ENCODE measurements at regions of chr1 and their contacts with region 1.

Region 1: DNA sequence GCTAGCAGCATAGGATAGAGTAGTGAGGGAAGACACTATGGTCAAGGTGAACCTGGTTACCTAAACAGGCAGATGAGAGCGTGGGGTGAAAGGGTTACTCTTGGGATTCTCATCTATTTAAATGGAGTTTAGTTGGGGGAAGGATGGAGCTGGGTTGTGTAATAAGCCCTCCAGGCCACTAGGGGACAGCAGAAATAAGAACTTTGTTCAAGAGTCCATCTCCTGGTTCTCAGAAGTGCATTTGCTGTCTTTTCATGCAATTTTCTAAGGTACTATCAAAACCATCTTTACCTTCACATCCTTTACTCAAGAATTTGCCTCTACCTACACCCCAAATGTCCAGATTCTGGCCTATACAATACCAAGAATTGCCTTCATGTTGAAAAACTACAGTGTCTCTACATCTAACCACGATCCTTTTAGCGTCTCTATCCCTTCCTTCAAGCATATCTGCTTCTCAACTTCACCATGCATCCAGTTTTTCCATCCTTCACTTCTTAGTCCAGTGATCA is 28.0 kb downstream of the SLAMF1 start:
- DNase-seq: peak; percentile 63
- ATAC-seq: peak; percentile 24
- H3K4me3 Mint-ChIP-seq: no peak overlapping the region
- H3K27ac Mint-ChIP-seq: peak overlapping the region; percentile 81
- H3K4me1 Mint-ChIP-seq: peaks cover 56% of the 10 kb centered on the region
- H3K27me3 Mint-ChIP-seq: no peaks in the 10 kb centered on the region
- CTCF ChIP-seq: peak; percentile 91

Region 2: GRCh38 chr1:160376525-160377131 is 242.2 kb before region 1 on chr1:
- CTCF ChIA-PET with region 1: interaction called, 10 read pairs
- POLR2A ChIA-PET with region 1: no interaction called
- intact Hi-C with region 1: no loop called
- DNase-seq: peak; percentile 41
- ATAC-seq: peak; percentile 85
- H3K4me3 Mint-ChIP-seq: no peak overlapping the region
- H3K27ac Mint-ChIP-seq: no peak overlapping the region
- H3K4me1 Mint-ChIP-seq: peaks cover 11% of the 10 kb centered on the region
- H3K27me3 Mint-ChIP-seq: no peaks in the 10 kb centered on the region
- CTCF ChIP-seq: peak; percentile 95

Region 3: DNA sequence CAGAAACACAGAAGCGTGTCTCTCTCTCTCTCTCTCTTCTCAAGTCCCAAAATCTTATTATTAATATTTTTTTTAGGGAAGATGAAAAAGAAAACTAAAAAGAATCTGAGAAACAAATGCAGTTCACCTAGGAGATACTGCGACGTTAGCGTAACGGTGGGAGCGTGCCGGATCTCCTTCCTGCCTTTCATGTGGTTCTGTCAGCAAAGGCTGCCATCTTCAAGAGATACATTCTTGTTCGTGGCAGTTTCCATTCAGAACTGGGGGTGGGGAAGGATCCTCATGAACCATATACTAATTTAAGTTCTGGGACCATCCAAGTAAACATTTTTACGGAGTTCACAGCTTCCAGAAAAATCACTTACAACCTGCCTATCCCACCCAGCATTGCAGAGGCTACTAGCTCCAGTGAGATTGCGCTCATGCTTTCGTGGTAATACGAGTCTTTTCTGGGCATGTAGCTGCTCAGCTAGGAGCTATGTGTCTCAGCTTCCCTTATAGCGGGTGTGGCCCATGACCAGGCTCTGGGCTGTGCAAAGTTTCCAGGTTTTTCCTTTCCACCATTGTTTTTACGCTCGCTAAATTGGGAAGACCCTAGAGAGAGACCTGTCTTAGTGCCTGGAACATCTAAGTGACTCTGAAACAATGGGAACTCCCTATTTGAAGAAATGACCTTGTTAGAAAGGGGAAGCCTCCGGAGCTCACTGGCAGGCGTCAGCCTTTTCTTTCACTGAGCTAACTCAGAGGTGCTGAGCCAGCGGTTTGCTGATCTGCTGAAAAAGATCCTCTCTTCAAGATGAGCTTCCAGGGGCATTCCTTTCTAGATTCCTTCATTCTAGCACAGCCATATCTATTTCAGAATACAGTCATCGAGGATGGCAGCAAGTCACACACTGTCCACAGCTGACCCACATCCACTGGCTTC is 10.7 kb after region 1 on chr1:
- CTCF ChIA-PET with region 1: interaction called, 28 read pairs
- POLR2A ChIA-PET with region 1: interaction called, 9 read pairs
- intact Hi-C with region 1: no loop called
- DNase-seq: peak; percentile 90
- ATAC-seq: peak; percentile 30
- H3K4me3 Mint-ChIP-seq: peak overlapping the region; percentile 67
- H3K27ac Mint-ChIP-seq: peak overlapping the region; percentile 98
- H3K4me1 Mint-ChIP-seq: peaks cover 95% of the 10 kb centered on the region
- H3K27me3 Mint-ChIP-seq: no peaks in the 10 kb centered on the region
- CTCF ChIP-seq: no peak

Region 4: DNA sequence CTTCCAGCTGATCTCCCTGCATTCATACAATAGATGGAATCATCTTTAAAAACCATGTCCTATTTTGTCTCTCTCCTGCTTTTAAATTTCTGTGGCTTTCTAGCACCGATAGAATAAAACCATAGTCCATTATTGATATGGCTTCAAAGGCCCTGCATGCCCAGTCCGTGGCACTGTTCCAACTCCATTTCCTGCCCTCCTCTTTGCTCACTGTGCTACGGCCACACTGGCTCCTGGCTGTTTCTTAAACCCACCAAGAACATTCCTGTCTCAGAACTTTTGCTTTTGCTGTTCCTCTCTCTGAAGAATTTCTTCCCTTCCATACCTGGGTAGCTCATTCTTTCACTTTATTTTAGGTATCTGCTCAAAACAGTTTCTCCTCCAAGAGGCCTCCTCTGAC is 20.8 kb after region 1 on chr1:
- CTCF ChIA-PET with region 1: interaction called, 24 read pairs
- POLR2A ChIA-PET with region 1: interaction called, 3 read pairs
- intact Hi-C with region 1: no loop called
- DNase-seq: no peak
- ATAC-seq: no peak
- H3K4me3 Mint-ChIP-seq: peak overlapping the region; percentile 74
- H3K27ac Mint-ChIP-seq: peak overlapping the region; percentile 98
- H3K4me1 Mint-ChIP-seq: peaks cover 80% of the 10 kb centered on the region
- H3K27me3 Mint-ChIP-seq: no peaks in the 10 kb centered on the region
- CTCF ChIP-seq: no peak

Region 5: GRCh38 chr1:160646711-160647328 is 28.0 kb after region 1 on chr1 and contains the start of gene SLAMF1:
- CTCF ChIA-PET with region 1: interaction called, 24 read pairs
- POLR2A ChIA-PET with region 1: interaction called, 6 read pairs
- intact Hi-C with region 1: no loop called
- DNase-seq: peak; percentile 70
- ATAC-seq: peak; percentile 74
- H3K4me3 Mint-ChIP-seq: peak within 1 kb of the TSS; percentile 97
- H3K27ac Mint-ChIP-seq: peak within 1 kb of the TSS; percentile 99
- H3K4me1 Mint-ChIP-seq: peaks cover 49% of the 10 kb centered on the region
- H3K27me3 Mint-ChIP-seq: no peaks in the 10 kb centered on the region
- CTCF ChIP-seq: no peak
- total RNA-seq, gene SLAMF1: 65.9 to 67.8 TPM

Region 6: DNA sequence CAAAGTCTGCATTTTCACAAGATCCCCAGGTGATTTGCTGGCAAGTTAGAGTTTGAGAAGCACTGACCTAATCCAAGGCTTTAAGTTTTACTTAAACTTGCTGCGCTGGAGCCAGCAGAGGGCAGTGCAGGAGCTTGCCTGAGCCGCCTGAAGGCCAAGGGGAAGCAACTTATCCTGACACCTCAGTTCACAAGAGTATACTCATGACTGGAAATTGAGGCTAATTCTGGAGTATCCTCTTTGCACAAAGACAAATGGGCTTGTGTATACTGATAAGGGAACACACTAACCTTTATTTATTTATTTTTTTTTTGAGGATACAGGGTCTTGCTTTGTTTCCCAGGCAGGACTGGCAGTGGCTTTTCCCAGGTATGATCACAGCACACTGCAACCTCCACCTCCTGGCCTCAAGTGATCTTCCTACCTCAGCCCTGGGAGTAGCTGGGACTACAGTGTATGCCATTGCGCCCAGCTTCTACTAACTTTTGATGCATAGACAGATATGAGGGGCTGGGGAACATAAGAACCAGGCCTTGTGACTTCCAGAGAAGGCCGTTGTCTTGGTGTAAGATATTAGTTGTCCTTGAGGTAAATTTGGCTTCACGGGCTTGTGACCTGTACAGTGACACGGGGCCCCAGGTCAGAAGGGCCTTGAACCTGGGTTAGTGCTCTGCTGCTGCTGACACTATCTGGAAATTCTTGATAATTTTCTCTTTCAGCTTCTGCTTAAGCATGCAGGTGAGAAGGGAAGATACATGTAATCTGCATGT is 57.0 kb after region 1 on chr1:
- CTCF ChIA-PET with region 1: interaction called, 29 read pairs
- POLR2A ChIA-PET with region 1: interaction called, 5 read pairs
- intact Hi-C with region 1: no loop called
- DNase-seq: peak; percentile 88
- ATAC-seq: peak; percentile 85
- H3K4me3 Mint-ChIP-seq: no peak overlapping the region
- H3K27ac Mint-ChIP-seq: peak overlapping the region; percentile 73
- H3K4me1 Mint-ChIP-seq: peaks cover 30% of the 10 kb centered on the region
- H3K27me3 Mint-ChIP-seq: no peaks in the 10 kb centered on the region
- CTCF ChIP-seq: peak; percentile 73

Region 7: DNA sequence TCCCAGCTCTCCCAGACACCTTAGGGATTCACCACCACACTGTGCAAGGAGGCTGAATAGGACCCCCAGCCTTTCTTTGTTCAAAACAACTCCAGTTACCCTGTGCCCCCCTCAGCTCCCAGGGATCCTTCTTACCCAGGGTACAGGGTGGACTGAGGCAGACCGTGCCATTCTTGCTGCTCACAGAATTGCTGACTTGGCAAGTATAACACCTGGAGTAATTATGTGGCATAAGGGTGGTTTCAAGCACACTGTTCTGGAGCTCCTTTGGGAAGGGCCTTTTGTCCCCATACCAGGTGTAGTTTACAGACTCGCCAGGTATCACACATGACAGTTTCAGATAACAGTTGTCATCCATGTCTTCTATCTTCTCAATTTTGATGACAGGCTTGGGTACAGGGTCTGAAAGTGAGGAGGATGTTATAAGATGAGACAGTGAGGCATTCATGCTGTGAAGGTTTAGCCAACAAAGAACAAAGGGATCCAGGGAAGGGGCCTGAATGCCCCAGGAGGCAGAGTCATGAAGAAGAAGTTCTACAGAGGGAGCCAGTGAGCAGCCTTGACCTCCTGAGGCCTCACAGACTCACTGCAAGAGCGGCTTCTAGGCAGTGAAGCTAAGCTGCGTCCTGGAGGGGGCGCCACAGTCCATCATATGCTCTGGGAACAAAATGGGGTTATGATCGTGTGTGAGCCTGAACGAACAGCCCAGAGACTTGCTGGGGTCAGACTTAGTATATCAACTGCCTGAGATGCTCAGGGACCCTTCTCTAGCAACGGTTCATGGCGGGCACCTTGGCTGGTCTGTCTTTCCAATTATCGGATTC is 62.5 kb after region 1 on chr1:
- CTCF ChIA-PET with region 1: interaction called, 29 read pairs
- POLR2A ChIA-PET with region 1: interaction called, 3 read pairs
- intact Hi-C with region 1: no loop called
- DNase-seq: peak; percentile 96
- ATAC-seq: peak; percentile 74
- H3K4me3 Mint-ChIP-seq: no peak overlapping the region
- H3K27ac Mint-ChIP-seq: peak overlapping the region; percentile 95
- H3K4me1 Mint-ChIP-seq: peaks cover 67% of the 10 kb centered on the region
- H3K27me3 Mint-ChIP-seq: no peaks in the 10 kb centered on the region
- CTCF ChIP-seq: peak; percentile 97

Region 8: GRCh38 chr1:160806109-160806665 is 187.4 kb after region 1 on chr1:
- CTCF ChIA-PET with region 1: no interaction called
- POLR2A ChIA-PET with region 1: no interaction called
- intact Hi-C with region 1: no loop called
- DNase-seq: no peak
- ATAC-seq: peak; percentile 45
- H3K4me3 Mint-ChIP-seq: no peak overlapping the region
- H3K27ac Mint-ChIP-seq: peak overlapping the region; percentile 82
- H3K4me1 Mint-ChIP-seq: peaks cover 83% of the 10 kb centered on the region
- H3K27me3 Mint-ChIP-seq: no peaks in the 10 kb centered on the region
- CTCF ChIP-seq: peak; percentile 46

Measured in activated CD8-positive, alpha-beta T cell treated with anti-CD3 and anti-CD28 coated beads for 36 hours (primary cell).